ENCODE measurements at regions of chr20 and their contacts with region 1.

Region 1: DNA sequence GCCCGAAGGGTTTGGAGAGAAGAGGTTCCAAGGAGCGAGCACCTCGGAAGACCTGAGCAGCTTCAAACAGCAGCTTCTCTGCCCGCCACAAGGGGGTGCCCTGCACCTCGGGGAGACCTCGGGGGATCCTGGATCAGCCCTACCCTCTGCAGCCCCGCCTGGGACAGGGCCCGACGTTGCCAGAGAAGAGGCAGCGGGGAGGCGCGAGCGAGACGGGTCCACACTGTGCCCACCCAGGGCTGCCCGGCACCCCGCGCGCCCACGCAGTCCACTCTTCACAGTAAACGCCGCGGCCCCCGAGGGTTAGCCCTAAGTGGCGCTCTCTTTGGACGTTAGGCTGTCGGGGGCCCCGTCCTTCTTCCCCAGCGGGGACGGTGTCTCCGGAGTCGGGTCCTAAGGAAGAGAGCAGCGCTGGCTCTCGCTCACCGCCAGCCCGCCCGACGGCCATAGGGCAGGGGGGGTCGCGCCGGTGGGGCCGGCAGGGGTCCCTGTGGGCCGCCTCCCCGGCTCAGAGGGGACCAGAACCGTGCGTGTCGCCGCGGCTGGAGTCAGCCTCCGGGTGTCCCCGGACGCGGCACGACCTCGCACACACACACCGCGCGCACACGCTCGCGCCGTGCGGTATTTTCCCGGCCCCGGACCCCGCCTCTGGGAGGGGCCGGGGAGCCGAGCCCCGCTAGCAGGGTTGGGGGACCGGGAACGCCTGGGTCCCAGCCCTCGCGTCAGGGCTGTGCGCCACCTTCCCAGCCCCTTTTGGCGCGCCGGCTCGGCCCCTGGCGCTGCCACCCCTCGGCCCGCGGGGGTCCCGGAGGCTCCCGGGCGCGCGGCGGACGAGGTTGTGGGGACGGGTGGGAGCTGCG is 929 bp downstream of the CDH22 start:
- H3K4me3 ChIP-seq: peak overlapping the region; percentile 16
- H3K27ac ChIP-seq: no peak overlapping the region
- H3K4me1 ChIP-seq: peaks cover 3% of the 10 kb centered on the region; the same call in 1 of the 2 replicates
- CTCF ChIP-seq: peak; percentile 87

Region 2: DNA sequence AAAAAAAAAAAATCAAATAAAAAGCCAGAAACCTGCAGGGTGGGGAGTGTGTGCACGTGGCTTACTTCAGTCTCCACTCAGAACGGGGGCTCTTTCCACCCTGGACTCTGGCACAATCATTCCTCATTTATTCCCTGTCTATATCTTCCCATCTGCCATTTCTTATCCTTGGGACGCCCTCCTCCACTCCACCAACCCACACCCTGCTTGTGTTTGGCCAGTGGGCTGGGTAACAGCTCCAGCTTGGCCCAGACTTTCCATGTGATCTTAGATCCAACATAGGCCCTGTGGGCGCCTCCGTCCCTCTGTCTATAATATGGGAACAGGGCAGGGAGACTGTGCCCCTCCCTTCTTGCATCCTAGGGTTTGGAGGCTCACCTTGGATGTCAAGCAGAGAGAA is 121.2 kb before region 1 on chr20:
- CTCF ChIA-PET with region 1: no interaction called
- POLR2A ChIA-PET with region 1: no interaction called
- H3K4me3 ChIP-seq: no peak overlapping the region
- H3K27ac ChIP-seq: no peak overlapping the region
- H3K4me1 ChIP-seq: no peaks in the 10 kb centered on the region
- CTCF ChIP-seq: no peak

Region 3: GRCh38 chr20:46438156-46438750 is 130.9 kb after region 1 on chr20:
- CTCF ChIA-PET with region 1: interaction called, 10 read pairs
- POLR2A ChIA-PET with region 1: no interaction called
- H3K4me3 ChIP-seq: no peak overlapping the region
- H3K27ac ChIP-seq: no peak overlapping the region
- H3K4me1 ChIP-seq: no peaks in the 10 kb centered on the region
- CTCF ChIP-seq: no peak

Measured in HEK293 (cell line).